ENCODE measurements at regions of chr1 and their contacts with region 1.

Region 1: DNA sequence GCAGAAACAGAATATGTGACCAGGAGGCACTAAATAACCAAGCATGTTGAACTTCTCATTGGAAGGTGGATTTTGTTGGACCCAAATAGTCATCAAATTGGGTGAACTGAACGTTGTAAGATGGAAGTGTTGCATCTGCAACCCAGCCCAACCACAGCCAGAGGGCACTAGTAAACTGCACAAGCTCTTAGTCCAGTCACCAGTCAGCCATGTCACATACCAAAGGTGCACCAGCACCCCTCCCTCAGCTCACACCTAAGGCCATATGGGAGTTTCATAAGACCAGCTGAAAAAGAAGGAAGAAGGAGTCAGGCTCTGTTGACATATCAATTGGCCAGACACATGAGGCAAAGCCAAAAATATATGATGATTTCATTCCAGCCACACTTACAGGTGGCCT is 481.7 kb upstream of the NR5A2 start:
- DNase-seq: peak in 1 of 4 experiments; percentile 3
- ATAC-seq: no peak
- H3K4me3 ChIP-seq: no peak overlapping the region
- H3K27ac ChIP-seq: no peak overlapping the region
- H3K4me1 ChIP-seq: no peaks in the 10 kb centered on the region
- H3K27me3 ChIP-seq: no peaks in the 10 kb centered on the region
- CTCF ChIP-seq: 0 out of 6 replicates have a peak, but pooled peaks of 2 of the 3 experiments have one; percentile 2 to 15
- EP300 ChIP-seq: no peak
- POLR2A ChIP-seq: no peak
- RAD21 ChIP-seq: peak in 1 of 2 experiments; percentile 41; a peak in 2 of 4 replicates

Region 2: DNA sequence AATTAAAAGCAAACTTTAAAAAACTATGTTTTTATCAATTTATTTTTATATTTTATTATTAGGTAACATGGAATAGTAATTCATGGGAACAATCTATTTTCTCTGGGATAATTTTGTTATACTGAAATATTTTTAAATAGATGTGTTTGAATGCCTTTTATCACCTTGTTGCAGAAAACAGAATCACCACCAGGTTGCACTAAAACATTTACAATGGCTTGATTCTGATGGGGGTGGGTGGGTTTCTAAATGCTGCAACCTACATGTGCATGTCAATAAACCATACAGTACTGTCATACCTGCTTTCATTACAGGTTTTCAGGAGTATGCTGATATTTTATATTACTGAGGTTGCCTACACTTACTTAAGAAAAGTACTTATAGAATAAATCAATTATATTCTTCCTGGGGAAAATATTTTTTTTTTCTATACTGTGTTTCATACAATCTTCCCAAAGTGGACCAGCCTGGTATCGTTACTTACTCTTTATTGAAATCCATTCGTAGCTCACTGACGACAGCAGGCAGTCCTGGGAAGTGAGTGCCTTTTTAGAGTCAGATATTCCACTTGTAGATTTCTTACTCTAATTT is 774.1 kb before region 1 on chr1:
- CTCF ChIA-PET with region 1: interaction called, 3 read pairs
- POLR2A ChIA-PET with region 1: no interaction called
- in situ Hi-C with region 1: no loop called
- intact Hi-C with region 1: loop called (anchors 10 kb)
- DNase-seq: peak in 3 of 4 experiments; percentile 16 to 21 (median 20)
- ATAC-seq: peak; percentile 68; the same call in 2 of the 3 replicates
- H3K4me3 ChIP-seq: no peak overlapping the region
- H3K27ac ChIP-seq: no peak overlapping the region
- H3K4me1 ChIP-seq: no peaks in the 10 kb centered on the region
- H3K27me3 ChIP-seq: no peaks in the 10 kb centered on the region
- CTCF ChIP-seq: peak in 2 of 3 experiments; percentile 22 to 36; a peak in 2 of 6 replicates
- EP300 ChIP-seq: no peak
- POLR2A ChIP-seq: no peak
- RAD21 ChIP-seq: peak; percentile 33 to 69; a peak in 3 of 4 replicates

Region 3: GRCh38 chr1:199009447-199009846 is 536.3 kb before region 1 on chr1:
- CTCF ChIA-PET with region 1: no interaction called
- POLR2A ChIA-PET with region 1: no interaction called
- in situ Hi-C with region 1: no loop called
- intact Hi-C with region 1: no loop called
- DNase-seq: no peak
- ATAC-seq: no peak
- H3K4me3 ChIP-seq: no peak overlapping the region
- H3K27ac ChIP-seq: no peak overlapping the region
- H3K4me1 ChIP-seq: no peaks in the 10 kb centered on the region
- H3K27me3 ChIP-seq: no peaks in the 10 kb centered on the region
- CTCF ChIP-seq: no peak
- EP300 ChIP-seq: no peak
- POLR2A ChIP-seq: no peak
- RAD21 ChIP-seq: no peak